Activated CD4-positive, alpha-beta T cell treated with anti-CD3 and anti-CD28 coated beads for 36 hours (primary cell): ENCODE measurements at regions of chr15 and their contacts with region 1.

Region 1: DNA sequence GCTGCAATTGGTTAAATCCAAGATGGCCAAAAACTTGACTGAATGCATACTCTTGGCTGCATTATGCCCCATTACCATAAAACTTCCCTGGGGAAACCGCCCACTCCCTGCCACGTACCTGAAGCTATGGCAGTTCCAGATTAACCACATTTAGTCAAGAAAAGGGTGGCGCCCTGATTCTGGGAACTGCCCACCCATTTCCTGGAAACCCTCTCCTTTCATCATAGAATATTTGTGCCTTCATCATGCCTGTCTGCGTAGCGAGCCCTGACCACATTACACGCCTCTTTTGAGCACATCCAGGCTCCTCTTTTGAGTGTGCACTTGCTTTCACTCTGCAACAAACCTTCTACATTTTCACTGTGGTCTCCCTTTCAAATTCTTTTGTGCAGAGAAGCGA is 5.2 kb downstream of the LINS1 start:
- DNase-seq: peak; percentile 96
- ATAC-seq: peak; percentile 82
- H3K4me3 Mint-ChIP-seq: peak overlapping the region; percentile 74
- H3K27ac Mint-ChIP-seq: peak overlapping the region; percentile 98
- H3K4me1 Mint-ChIP-seq: peaks cover 74% of the 10 kb centered on the region
- H3K27me3 Mint-ChIP-seq: no peaks in the 10 kb centered on the region

Region 2: GRCh38 chr15:99733268-99734039 is 863.3 kb before region 1 on chr15 and contains the start of gene LYSMD4:
- CTCF ChIA-PET with region 1: no interaction called
- POLR2A ChIA-PET with region 1: interaction called, 3 read pairs
- intact Hi-C with region 1: loop called (anchors 1 to 10 kb)
- DNase-seq: peak; percentile 100
- ATAC-seq: peak; percentile 99
- H3K4me3 Mint-ChIP-seq: peak within 1 kb of the TSS; percentile 71
- H3K27ac Mint-ChIP-seq: peak within 1 kb of the TSS; percentile 91
- H3K4me1 Mint-ChIP-seq: peaks cover 23% of the 10 kb centered on the region
- H3K27me3 Mint-ChIP-seq: no peaks in the 10 kb centered on the region
- total RNA-seq, gene LYSMD4: 4.7 to 5.3 TPM

Region 3: GRCh38 chr15:99845009-99845408 is 751.8 kb before region 1 on chr15:
- CTCF ChIA-PET with region 1: no interaction called
- POLR2A ChIA-PET with region 1: no interaction called
- intact Hi-C with region 1: loop called in 1 of 2 experiments (anchors 10 kb)
- DNase-seq: peak; percentile 58
- ATAC-seq: peak; percentile 85
- H3K4me3 Mint-ChIP-seq: no peak overlapping the region
- H3K27ac Mint-ChIP-seq: peak overlapping the region; percentile 74
- H3K4me1 Mint-ChIP-seq: peaks cover 55% of the 10 kb centered on the region
- H3K27me3 Mint-ChIP-seq: no peaks in the 10 kb centered on the region

Region 4: GRCh38 chr15:100111103-100112060 is 485.4 kb before region 1 on chr15:
- CTCF ChIA-PET with region 1: no interaction called
- POLR2A ChIA-PET with region 1: no interaction called
- intact Hi-C with region 1: loop called in 1 of 2 experiments (anchors 1 kb)
- DNase-seq: peak; percentile 74
- ATAC-seq: peak; percentile 94
- H3K4me3 Mint-ChIP-seq: peak overlapping the region; percentile 23
- H3K27ac Mint-ChIP-seq: peak overlapping the region; percentile 99
- H3K4me1 Mint-ChIP-seq: peaks cover 46% of the 10 kb centered on the region
- H3K27me3 Mint-ChIP-seq: no peaks in the 10 kb centered on the region

Region 5: GRCh38 chr15:100349696-100350433 is 246.9 kb before region 1 on chr15:
- CTCF ChIA-PET with region 1: interaction called, 14 read pairs
- POLR2A ChIA-PET with region 1: interaction called, 4 read pairs
- intact Hi-C with region 1: loop called in 1 of 2 experiments (anchors 2 kb)
- DNase-seq: peak; percentile 93
- ATAC-seq: peak; percentile 95
- H3K4me3 Mint-ChIP-seq: peak overlapping the region; percentile 78
- H3K27ac Mint-ChIP-seq: peak overlapping the region; percentile 77
- H3K4me1 Mint-ChIP-seq: peaks cover 7% of the 10 kb centered on the region
- H3K27me3 Mint-ChIP-seq: peaks cover 7% of the 10 kb centered on the region

Region 6: GRCh38 chr15:100559330-100559729 is 37.5 kb before region 1 on chr15:
- CTCF ChIA-PET with region 1: no interaction called
- POLR2A ChIA-PET with region 1: no interaction called
- intact Hi-C with region 1: no loop called
- DNase-seq: no peak
- ATAC-seq: no peak
- H3K4me3 Mint-ChIP-seq: no peak overlapping the region
- H3K27ac Mint-ChIP-seq: peak overlapping the region; percentile 37
- H3K4me1 Mint-ChIP-seq: no peaks in the 10 kb centered on the region
- H3K27me3 Mint-ChIP-seq: no peaks in the 10 kb centered on the region

Region 7: DNA sequence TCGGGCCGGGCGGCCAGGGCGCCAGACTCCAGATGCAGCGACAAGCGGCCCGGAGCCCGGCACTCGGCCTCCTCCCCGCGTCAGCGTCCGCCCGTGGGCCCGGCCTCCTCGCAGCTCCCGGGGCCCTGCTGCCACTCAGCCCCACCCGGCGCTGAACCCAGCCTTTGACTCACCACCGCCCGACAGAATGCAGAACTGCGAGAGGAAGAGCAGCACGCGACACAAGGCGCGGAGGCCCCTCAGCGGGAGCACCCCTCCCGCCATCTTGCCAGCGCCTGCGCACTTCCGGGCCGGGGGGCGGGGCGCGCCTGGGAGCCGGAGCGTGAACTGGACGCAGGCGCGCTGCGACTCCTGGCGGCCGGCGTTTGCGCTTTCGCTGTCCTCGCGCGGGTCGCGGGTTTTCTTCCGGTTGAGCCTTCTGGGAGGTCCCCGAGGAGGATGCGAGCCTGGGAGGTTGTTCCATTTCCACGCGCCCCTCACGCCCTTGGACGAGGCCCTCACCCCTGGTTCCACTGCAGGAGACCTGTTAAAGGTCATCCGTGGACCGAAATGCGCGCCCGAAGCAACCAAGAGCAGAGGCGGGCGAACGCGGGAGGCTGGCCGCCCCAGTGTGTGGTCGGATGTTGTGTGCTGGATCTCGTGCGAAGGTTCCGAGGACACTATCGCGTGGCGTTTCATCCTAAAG is 1055.4 kb after region 1 on chr15 and contains the start of gene TM2D3:
- CTCF ChIA-PET with region 1: no interaction called
- POLR2A ChIA-PET with region 1: no interaction called
- intact Hi-C with region 1: loop called (anchors 1 to 5 kb)
- DNase-seq: peak; percentile 96
- ATAC-seq: peak; percentile 96
- H3K4me3 Mint-ChIP-seq: peak within 1 kb of the TSS; percentile 91
- H3K27ac Mint-ChIP-seq: peak within 1 kb of the TSS; percentile 97
- H3K4me1 Mint-ChIP-seq: peaks cover 43% of the 10 kb centered on the region
- H3K27me3 Mint-ChIP-seq: no peaks in the 10 kb centered on the region
- total RNA-seq, gene TM2D3: 34.3 to 35.9 TPM